ENCODE measurements at regions of chr12 and their contacts with region 1.

Region 1: GRCh38 chr12:6825398-6826124 is 2.6 kb upstream of the P3H3 start:
- DNase-seq: peak; percentile 82
- H3K4me3 ChIP-seq: no peak overlapping the region
- H3K4me3 Mint-ChIP-seq: peak overlapping the region; percentile 51 to 84
- H3K27ac ChIP-seq: no peak overlapping the region
- H3K27ac Mint-ChIP-seq: peak overlapping the region in 1 of 7 donors; percentile 43
- H3K4me1 ChIP-seq: peaks cover 30 to 56% of the 10 kb centered on the region in 2 donors
- H3K4me1 Mint-ChIP-seq: peaks cover 49% of the 10 kb centered on the region
- H3K27me3 ChIP-seq: peaks cover 12 to 50% of the 10 kb centered on the region in 2 donors
- H3K27me3 Mint-ChIP-seq: peaks cover 46 to 63% (median 46%) of the 10 kb centered on the region in 3 donors
- CTCF ChIP-seq: peak; percentile 95

Region 2: DNA sequence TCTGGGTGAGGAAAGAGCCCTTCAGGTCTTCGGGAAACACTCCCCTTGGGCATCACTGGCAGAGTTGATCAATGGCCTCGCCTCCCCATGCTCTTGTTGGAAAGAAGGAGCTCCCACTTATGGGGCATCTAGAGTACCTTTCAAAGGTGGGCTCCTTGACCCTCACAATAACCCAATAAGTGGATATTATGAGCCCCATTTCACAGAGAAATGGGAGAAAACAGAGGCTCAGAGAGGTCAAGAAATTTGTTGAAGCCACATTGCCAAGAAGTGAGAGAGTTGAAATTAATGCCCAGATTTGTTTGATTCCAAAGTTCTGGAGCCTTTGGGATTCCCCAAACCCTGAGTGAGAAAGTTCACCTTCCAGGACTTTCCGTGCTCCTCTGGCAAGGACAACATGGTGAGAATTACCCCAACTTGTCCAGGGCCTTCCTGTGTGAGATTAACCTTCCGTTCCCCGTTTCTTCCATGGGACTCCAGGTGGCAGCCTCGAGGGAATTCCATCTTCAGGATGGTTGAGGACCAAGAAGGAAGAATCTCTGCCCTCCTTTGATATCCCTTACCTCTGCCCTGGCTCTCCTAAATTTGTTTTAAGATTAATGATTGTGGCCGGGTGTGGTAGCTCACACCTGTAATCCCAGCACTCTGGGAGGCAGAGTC is 210.9 kb before region 1 on chr12:
- intact Hi-C with region 1: loop called in 1 of 2 experiments (anchors 5 kb)
- DNase-seq: no peak
- H3K4me3 ChIP-seq: peak overlapping the region in 1 of 3 experiments; percentile 32
- H3K4me3 Mint-ChIP-seq: no peak overlapping the region
- H3K27ac ChIP-seq: peak overlapping the region; percentile 51 to 72
- H3K27ac Mint-ChIP-seq: peak overlapping the region; percentile 36 to 92 (median 87)
- H3K4me1 ChIP-seq: peaks cover 44 to 49% of the 10 kb centered on the region in 2 donors
- H3K4me1 Mint-ChIP-seq: peaks cover 61% of the 10 kb centered on the region
- H3K27me3 ChIP-seq: no peaks in the 10 kb centered on the region
- H3K27me3 Mint-ChIP-seq: peaks cover 0 to 3% (median 3%) of the 10 kb centered on the region in 3 donors
- CTCF ChIP-seq: no peak

Region 3: DNA sequence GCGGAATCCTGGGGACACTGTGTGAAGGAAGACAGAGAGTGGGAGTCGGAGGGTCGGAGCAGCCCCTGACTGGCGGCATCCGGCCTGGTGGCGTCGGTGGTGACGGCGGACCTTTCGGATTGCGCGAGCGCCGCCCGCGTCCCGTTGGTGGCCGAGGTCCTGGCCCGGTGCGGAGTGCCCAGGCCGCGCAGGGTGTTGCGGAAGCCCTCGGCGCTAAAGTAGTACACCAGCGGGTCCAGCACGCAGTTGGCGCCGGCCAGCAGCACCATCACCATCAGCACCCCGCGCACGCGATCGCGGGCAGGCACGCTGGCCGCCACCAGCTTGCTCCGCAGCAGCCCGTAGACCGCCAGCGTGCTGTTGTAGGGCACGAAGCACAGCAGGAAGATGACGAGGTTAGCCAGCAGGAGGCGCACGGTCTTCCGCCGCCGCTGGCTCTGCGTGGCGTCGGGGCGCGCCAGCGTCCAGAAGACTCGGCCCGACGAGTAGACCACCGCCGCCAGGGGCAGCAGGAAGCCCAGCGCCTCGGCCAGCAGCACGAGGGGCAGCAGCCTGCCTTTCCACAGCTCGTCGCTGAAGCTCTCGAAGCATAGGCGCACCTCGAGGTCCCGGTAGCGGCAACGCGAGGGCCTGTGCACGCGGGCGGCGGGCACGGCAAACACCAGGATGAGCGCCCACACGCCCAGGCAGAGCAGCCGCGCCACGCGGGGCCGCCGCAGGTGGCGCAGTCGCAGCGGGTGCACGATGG is 205.2 kb before region 1 on chr12:
- intact Hi-C with region 1: loop called (anchors 5 kb)
- DNase-seq: peak; percentile 69 to 78 (median 76)
- H3K4me3 ChIP-seq: peak overlapping the region in 2 of 3 experiments; percentile 9 to 66
- H3K4me3 Mint-ChIP-seq: peak overlapping the region; percentile 65 to 78
- H3K27ac ChIP-seq: no peak overlapping the region
- H3K27ac Mint-ChIP-seq: peak overlapping the region in 2 of 7 donors; percentile 30 to 68
- H3K4me1 ChIP-seq: peaks cover 34 to 42% of the 10 kb centered on the region in 2 donors
- H3K4me1 Mint-ChIP-seq: peaks cover 46% of the 10 kb centered on the region
- H3K27me3 ChIP-seq: no peaks in the 10 kb centered on the region
- H3K27me3 Mint-ChIP-seq: peaks cover 0 to 5% (median 4%) of the 10 kb centered on the region in 3 donors
- CTCF ChIP-seq: peak; percentile 95

Region 4: DNA sequence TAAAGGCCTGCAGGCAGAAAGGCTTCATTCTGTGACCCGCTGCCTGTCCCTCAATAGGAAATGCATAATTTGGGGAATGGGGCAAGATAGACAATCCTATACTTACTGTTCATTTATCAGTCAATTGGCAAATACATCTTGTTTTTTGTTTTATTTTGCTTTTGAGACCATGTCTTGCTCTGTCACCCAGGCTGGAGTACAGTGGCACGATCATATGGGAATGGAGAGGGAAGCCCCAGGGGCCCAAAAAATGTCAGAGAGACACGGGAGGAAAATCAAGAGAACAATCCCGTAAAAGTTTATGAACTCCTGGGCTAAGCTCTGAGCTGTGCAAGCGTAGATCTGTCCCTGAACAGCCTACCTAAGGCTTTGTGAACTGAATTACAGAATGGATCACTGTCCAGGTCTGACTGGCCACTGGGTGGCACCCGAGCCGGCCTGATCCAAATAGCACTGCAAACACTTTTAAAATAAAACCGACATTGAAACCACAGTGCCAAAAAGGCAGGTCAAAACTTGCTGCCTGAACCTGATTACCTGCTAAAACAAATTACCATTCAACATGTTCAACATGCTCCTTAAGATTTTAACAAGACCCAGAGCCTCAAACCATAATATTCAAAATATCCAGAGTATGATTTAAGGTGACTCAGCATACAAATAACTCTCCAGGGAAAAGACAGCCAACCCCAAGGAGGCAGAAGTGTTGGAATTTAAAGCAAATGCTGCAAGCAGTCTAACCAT is 89.9 kb before region 1 on chr12:
- intact Hi-C with region 1: loop called (anchors 1 to 5 kb)
- DNase-seq: peak; percentile 34 to 44 (median 43)
- H3K4me3 ChIP-seq: no peak overlapping the region
- H3K4me3 Mint-ChIP-seq: no peak overlapping the region
- H3K27ac ChIP-seq: no peak overlapping the region
- H3K27ac Mint-ChIP-seq: peak overlapping the region in 2 of 7 donors; percentile 38 to 77
- H3K4me1 ChIP-seq: no peaks in the 10 kb centered on the region
- H3K4me1 Mint-ChIP-seq: peaks cover 4% of the 10 kb centered on the region
- H3K27me3 ChIP-seq: no peaks in the 10 kb centered on the region
- H3K27me3 Mint-ChIP-seq: peaks cover 0 to 2% (median 2%) of the 10 kb centered on the region in 3 donors
- CTCF ChIP-seq: peak; percentile 68

Region 5: GRCh38 chr12:6752921-6753771 is 72.4 kb before region 1 on chr12 and contains the start of gene MLF2:
- intact Hi-C with region 1: loop called (anchors 1 to 2 kb)
- DNase-seq: peak; percentile 96 to 98 (median 98)
- H3K4me3 ChIP-seq: peak within 1 kb of the TSS; percentile 89 to 97 (median 90)
- H3K4me3 Mint-ChIP-seq: peak within 1 kb of the TSS; percentile 91 to 95
- H3K27ac ChIP-seq: peak within 1 kb of the TSS; percentile 97 to 98
- H3K27ac Mint-ChIP-seq: peak within 1 kb of the TSS; percentile 96 to 100 (median 99)
- H3K4me1 ChIP-seq: peaks cover 25% of the 10 kb centered on the region in 2 donors
- H3K4me1 Mint-ChIP-seq: peaks cover 29% of the 10 kb centered on the region
- H3K27me3 ChIP-seq: no peaks in the 10 kb centered on the region
- H3K27me3 Mint-ChIP-seq: peaks cover 4% of the 10 kb centered on the region in 3 donors
- CTCF ChIP-seq: no peak
- polyA plus RNA-seq, gene MLF2: 113 to 211 (median 140) TPM

Region 6: GRCh38 chr12:6792522-6793201 is 32.9 kb before region 1 on chr12:
- intact Hi-C with region 1: loop called in 1 of 2 experiments (anchors 5 kb)
- DNase-seq: peak; percentile 82 to 90 (median 87)
- H3K4me3 ChIP-seq: peak overlapping the region; percentile 65 to 97 (median 96)
- H3K4me3 Mint-ChIP-seq: peak overlapping the region; percentile 94 to 100
- H3K27ac ChIP-seq: peak overlapping the region; percentile 94
- H3K27ac Mint-ChIP-seq: peak overlapping the region; percentile 96 to 99 (median 98)
- H3K4me1 ChIP-seq: peaks cover 50 to 57% of the 10 kb centered on the region in 2 donors
- H3K4me1 Mint-ChIP-seq: peaks cover 56% of the 10 kb centered on the region
- H3K27me3 ChIP-seq: no peaks in the 10 kb centered on the region
- H3K27me3 Mint-ChIP-seq: peaks cover 0 to 2% (median 0%) of the 10 kb centered on the region in 3 donors
- CTCF ChIP-seq: no peak